Esophagus muscularis mucosa (tissue), 4 donors: ENCODE measurements at regions of chr3 and their contacts with region 1.

Region 1: GRCh38 chr3:126982471-126983175 is at the start of gene PLXNA1:
- DNase-seq: no peak
- H3K4me3 ChIP-seq: peak within 1 kb of the TSS; percentile 68 to 92 (median 84)
- H3K27ac ChIP-seq: peak within 1 kb of the TSS; percentile 76 to 85 (median 80)
- H3K4me1 ChIP-seq: peaks cover 24 to 52% (median 44%) of the 10 kb centered on the region in 4 donors
- H3K27me3 ChIP-seq: peaks cover 0 to 13% (median 0%) of the 10 kb centered on the region in 4 donors
- CTCF ChIP-seq: peak; percentile 83 to 91 (median 85)
- EP300 ChIP-seq: no peak
- POLR2A ChIP-seq: no peak
- total RNA-seq, gene PLXNA1: 33.6 to 82.4 (median 47.0) TPM

Region 2: GRCh38 chr3:127455541-127456450 is 473.2 kb after region 1 on chr3:
- intact Hi-C with region 1: loop called (anchors 5 kb)
- DNase-seq: no peak
- H3K4me3 ChIP-seq: peak overlapping the region; percentile 35 to 43 (median 38)
- H3K27ac ChIP-seq: no peak overlapping the region
- H3K4me1 ChIP-seq: peaks cover 18 to 26% (median 25%) of the 10 kb centered on the region in 4 donors
- H3K27me3 ChIP-seq: peaks cover 0 to 84% (median 53%) of the 10 kb centered on the region in 4 donors
- CTCF ChIP-seq: peak; percentile 84 to 93 (median 89)
- EP300 ChIP-seq: no peak
- POLR2A ChIP-seq: no peak

Region 3: GRCh38 chr3:127544192-127544802 is 561.7 kb after region 1 on chr3:
- intact Hi-C with region 1: loop called (anchors 10 kb)
- DNase-seq: no peak
- H3K4me3 ChIP-seq: no peak overlapping the region
- H3K27ac ChIP-seq: no peak overlapping the region
- H3K4me1 ChIP-seq: peaks cover 18 to 33% (median 23%) of the 10 kb centered on the region in 4 donors
- H3K27me3 ChIP-seq: no peaks in the 10 kb centered on the region
- CTCF ChIP-seq: peak; percentile 68 to 84 (median 76)
- EP300 ChIP-seq: no peak
- POLR2A ChIP-seq: no peak